Naive thymus-derived CD4-positive, alpha-beta T cell (primary cell): ENCODE measurements at regions of chr5 and their contacts with region 1.

Region 1: GRCh38 chr5:79235634-79236363 is at the start of gene JMY:
- DNase-seq: peak; percentile 73 to 89 (median 84)
- ATAC-seq: peak; percentile 89
- H3K4me3 ChIP-seq: peak within 1 kb of the TSS; percentile 95
- H3K4me3 Mint-ChIP-seq: peak within 1 kb of the TSS; percentile 86 to 97 (median 94)
- H3K27ac ChIP-seq: peak within 1 kb of the TSS; percentile 99
- H3K27ac Mint-ChIP-seq: peak within 1 kb of the TSS; percentile 83 to 98 (median 93)
- H3K4me1 ChIP-seq: peaks cover 6 to 35% of the 10 kb centered on the region in 2 donors
- H3K4me1 Mint-ChIP-seq: peaks cover 15 to 35% (median 29%) of the 10 kb centered on the region in 7 donors
- H3K27me3 ChIP-seq: no peaks in the 10 kb centered on the region
- H3K27me3 Mint-ChIP-seq: peaks cover 0 to 4% (median 0%) of the 10 kb centered on the region in 5 donors
- total RNA-seq, gene JMY: 6.5 to 47.0 (median 24.2) TPM

Region 2: DNA sequence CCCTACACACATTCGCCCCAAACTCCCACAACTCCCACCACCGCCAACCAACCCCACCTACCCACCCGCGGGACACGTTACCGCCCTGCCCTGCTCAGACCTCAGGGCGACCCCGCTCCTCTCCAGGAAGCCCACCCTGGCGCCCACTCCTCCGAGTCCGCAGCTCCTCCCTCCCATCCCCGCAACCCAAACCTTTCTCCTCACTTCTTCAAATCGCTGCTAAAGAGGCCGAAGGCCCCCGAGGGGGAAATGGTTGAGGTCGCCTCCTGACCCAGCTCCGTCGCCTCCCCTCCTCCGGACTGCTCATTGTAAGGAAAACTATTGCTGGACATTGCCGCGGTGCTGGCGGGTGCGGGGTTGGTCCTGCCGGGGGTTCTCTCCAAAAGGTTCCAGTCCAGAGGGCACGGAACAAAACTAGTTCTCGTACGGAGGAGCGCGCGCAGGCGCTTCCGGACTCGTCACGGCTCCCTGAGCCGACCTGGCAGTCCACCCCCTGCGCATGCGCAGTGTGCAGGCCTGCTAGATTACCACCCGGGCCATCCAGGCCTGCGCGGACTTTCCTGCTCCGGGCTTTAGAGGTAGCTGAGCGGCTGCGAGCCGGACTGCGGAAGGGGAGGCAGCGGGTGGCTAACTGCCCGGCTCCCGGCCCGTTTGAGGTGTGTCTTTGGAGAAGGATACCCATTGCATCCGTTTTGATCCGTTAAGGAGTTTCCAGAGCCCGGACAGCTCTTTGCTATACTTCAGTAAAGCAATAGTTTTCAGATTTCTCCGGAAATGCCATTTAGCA is 941.4 kb before region 1 on chr5 and contains the start of gene AP3B1:
- CTCF ChIA-PET with region 1: no interaction called
- POLR2A ChIA-PET with region 1: no interaction called
- intact Hi-C with region 1: loop called in 1 of 2 experiments (anchors 2 kb)
- DNase-seq: peak; percentile 94 to 98 (median 96)
- ATAC-seq: peak; percentile 97
- H3K4me3 ChIP-seq: peak within 1 kb of the TSS; percentile 98
- H3K4me3 Mint-ChIP-seq: peak within 1 kb of the TSS; percentile 86 to 100 (median 98)
- H3K27ac ChIP-seq: peak within 1 kb of the TSS; percentile 88
- H3K27ac Mint-ChIP-seq: peak within 1 kb of the TSS; percentile 77 to 99 (median 97)
- H3K4me1 ChIP-seq: peaks cover 5 to 9% of the 10 kb centered on the region in 2 donors
- H3K4me1 Mint-ChIP-seq: peaks cover 27 to 50% (median 46%) of the 10 kb centered on the region in 7 donors
- H3K27me3 ChIP-seq: no peaks in the 10 kb centered on the region
- H3K27me3 Mint-ChIP-seq: peaks cover 0 to 11% (median 0%) of the 10 kb centered on the region in 5 donors
- total RNA-seq, gene AP3B1: 30.2 to 45.0 (median 37.2) TPM

Region 3: GRCh38 chr5:79133657-79134451 is 101.9 kb before region 1 on chr5:
- CTCF ChIA-PET with region 1: interaction called, 5 read pairs
- POLR2A ChIA-PET with region 1: no interaction called
- intact Hi-C with region 1: loop called in 1 of 2 experiments (anchors 1 kb)
- DNase-seq: peak; percentile 26 to 60 (median 48)
- ATAC-seq: peak; percentile 84
- H3K4me3 ChIP-seq: peak overlapping the region; percentile 42
- H3K4me3 Mint-ChIP-seq: peak overlapping the region; percentile 45 to 80 (median 76)
- H3K27ac ChIP-seq: no peak overlapping the region
- H3K27ac Mint-ChIP-seq: peak overlapping the region in 4 of 9 donors; percentile 4 to 76 (median 42)
- H3K4me1 ChIP-seq: peaks cover 9 to 11% of the 10 kb centered on the region in 2 donors
- H3K4me1 Mint-ChIP-seq: peaks cover 7 to 17% (median 10%) of the 10 kb centered on the region in 7 donors
- H3K27me3 ChIP-seq: no peaks in the 10 kb centered on the region
- H3K27me3 Mint-ChIP-seq: peaks cover 0 to 9% (median 4%) of the 10 kb centered on the region in 5 donors

Region 4: DNA sequence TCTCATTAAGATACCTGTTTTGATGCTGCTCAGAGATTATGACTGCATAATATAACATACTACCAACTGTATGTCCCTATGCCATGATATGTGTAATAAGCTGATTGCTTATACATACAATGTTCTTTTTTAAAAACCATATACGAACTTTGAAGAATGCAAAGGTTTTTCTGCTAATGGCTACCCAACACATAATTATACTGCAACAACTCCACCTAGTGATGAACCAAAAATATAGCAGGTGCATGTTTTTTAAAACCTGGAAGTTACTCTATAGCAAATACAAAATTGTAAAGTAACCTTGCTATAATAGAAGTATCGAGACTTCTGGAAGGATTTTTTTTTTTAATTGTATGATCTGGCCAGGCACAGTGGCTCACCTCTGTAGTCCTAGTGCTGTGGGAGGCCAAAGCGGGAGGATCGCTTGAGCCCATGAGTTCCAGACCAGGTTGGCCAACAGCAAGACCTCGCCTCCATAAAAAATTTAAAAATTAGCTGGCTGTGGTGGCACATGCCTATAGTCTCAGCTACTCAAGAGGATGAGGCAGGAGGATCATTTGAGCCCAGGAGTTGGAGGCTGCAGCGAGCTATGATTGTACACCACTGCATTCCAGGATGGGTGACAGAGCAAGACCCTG is 229.0 kb after region 1 on chr5:
- CTCF ChIA-PET with region 1: no interaction called
- POLR2A ChIA-PET with region 1: no interaction called
- intact Hi-C with region 1: loop called in 1 of 2 experiments (anchors 10 kb)
- DNase-seq: peak in 5 of 9 donors; percentile 12 to 34 (median 32)
- ATAC-seq: peak; percentile 54
- H3K4me3 ChIP-seq: no peak overlapping the region
- H3K4me3 Mint-ChIP-seq: no peak overlapping the region
- H3K27ac ChIP-seq: no peak overlapping the region
- H3K27ac Mint-ChIP-seq: no peak overlapping the region
- H3K4me1 ChIP-seq: no peaks in the 10 kb centered on the region
- H3K4me1 Mint-ChIP-seq: peaks cover 0 to 2% (median 0%) of the 10 kb centered on the region in 7 donors
- H3K27me3 ChIP-seq: no peaks in the 10 kb centered on the region
- H3K27me3 Mint-ChIP-seq: peaks cover 0 to 9% (median 5%) of the 10 kb centered on the region in 5 donors

Region 5: GRCh38 chr5:79612667-79613198 is 376.9 kb after region 1 on chr5:
- CTCF ChIA-PET with region 1: no interaction called
- POLR2A ChIA-PET with region 1: no interaction called
- intact Hi-C with region 1: loop called (anchors 1 kb)
- DNase-seq: no peak
- ATAC-seq: no peak
- H3K4me3 ChIP-seq: peak overlapping the region; percentile 84
- H3K4me3 Mint-ChIP-seq: peak overlapping the region; percentile 95 to 100 (median 97)
- H3K27ac ChIP-seq: peak overlapping the region; percentile 90
- H3K27ac Mint-ChIP-seq: peak overlapping the region; percentile 91 to 99 (median 98)
- H3K4me1 ChIP-seq: peaks cover 14 to 18% of the 10 kb centered on the region in 2 donors
- H3K4me1 Mint-ChIP-seq: peaks cover 25 to 58% (median 44%) of the 10 kb centered on the region in 7 donors
- H3K27me3 ChIP-seq: no peaks in the 10 kb centered on the region
- H3K27me3 Mint-ChIP-seq: peaks cover 0 to 6% (median 2%) of the 10 kb centered on the region in 5 donors

Region 6: DNA sequence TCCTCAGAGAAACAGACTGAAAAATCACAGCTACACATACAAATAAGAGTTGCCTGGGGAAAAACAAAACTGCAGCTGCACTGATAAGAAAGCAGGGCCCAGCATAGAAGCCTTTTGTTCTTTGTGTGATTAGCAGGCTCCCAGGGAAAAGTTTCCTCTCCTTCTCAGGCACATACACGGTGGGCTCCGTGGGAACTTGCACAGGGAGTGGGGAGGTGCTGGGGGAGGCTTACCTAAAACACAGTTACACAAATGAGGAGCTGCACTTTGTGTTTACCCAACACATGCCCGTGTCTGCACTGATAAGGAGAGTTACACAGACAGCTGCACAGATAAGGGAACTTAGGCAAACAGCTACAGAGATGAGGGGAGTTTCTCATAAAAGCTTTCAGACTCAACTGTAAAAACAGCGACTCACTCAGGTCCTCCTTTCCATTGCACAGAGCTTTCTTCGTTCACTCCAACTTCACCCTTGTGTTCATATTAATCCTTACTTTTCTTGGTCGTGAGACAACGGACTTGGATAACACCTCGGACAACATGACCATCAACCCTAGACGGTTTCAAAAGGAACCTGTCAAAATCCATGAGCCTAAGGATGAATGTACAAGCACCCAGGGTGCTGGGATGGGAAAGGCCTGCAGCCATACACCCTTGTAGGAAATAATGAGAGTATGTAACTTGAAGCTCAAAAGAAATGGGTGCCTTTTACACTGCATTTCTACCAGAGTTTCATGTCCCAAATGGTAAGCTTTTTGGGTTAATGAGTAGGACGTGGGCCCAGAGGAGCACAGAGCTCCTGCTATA is 969.2 kb after region 1 on chr5:
- CTCF ChIA-PET with region 1: no interaction called
- POLR2A ChIA-PET with region 1: no interaction called
- intact Hi-C with region 1: no loop called
- DNase-seq: peak in 6 of 9 donors; percentile 44 to 59 (median 49)
- ATAC-seq: peak; percentile 88
- H3K4me3 ChIP-seq: no peak overlapping the region
- H3K4me3 Mint-ChIP-seq: peak overlapping the region in 9 of 10 donors; percentile 58 to 82 (median 73)
- H3K27ac ChIP-seq: peak overlapping the region; percentile 54
- H3K27ac Mint-ChIP-seq: peak overlapping the region; percentile 46 to 99 (median 90)
- H3K4me1 ChIP-seq: peaks cover 10 to 74% of the 10 kb centered on the region in 2 donors
- H3K4me1 Mint-ChIP-seq: peaks cover 45 to 99% (median 91%) of the 10 kb centered on the region in 7 donors
- H3K27me3 ChIP-seq: no peaks in the 10 kb centered on the region
- H3K27me3 Mint-ChIP-seq: no peaks in the 10 kb centered on the region

Region 7: GRCh38 chr5:80255732-80256479 is 1020.1 kb after region 1 on chr5 and contains the start of gene SERINC5:
- CTCF ChIA-PET with region 1: no interaction called
- POLR2A ChIA-PET with region 1: no interaction called
- intact Hi-C with region 1: loop called (anchors 10 kb)
- DNase-seq: peak; percentile 79 to 89 (median 86)
- ATAC-seq: peak; percentile 91
- H3K4me3 ChIP-seq: peak within 1 kb of the TSS; percentile 73
- H3K4me3 Mint-ChIP-seq: peak within 1 kb of the TSS; percentile 92 to 99 (median 96)
- H3K27ac ChIP-seq: peak within 1 kb of the TSS; percentile 88
- H3K27ac Mint-ChIP-seq: peak within 1 kb of the TSS; percentile 94 to 99 (median 98)
- H3K4me1 ChIP-seq: peaks cover 19 to 30% of the 10 kb centered on the region in 2 donors
- H3K4me1 Mint-ChIP-seq: peaks cover 40 to 56% (median 46%) of the 10 kb centered on the region in 7 donors
- H3K27me3 ChIP-seq: no peaks in the 10 kb centered on the region
- H3K27me3 Mint-ChIP-seq: no peaks in the 10 kb centered on the region
- total RNA-seq, gene SERINC5: 71.2 to 164 (median 163) TPM

Region 8: GRCh38 chr5:80654391-80655230 is 1418.8 kb after region 1 on chr5 and contains the starts of genes DHFR and MSH3:
- CTCF ChIA-PET with region 1: no interaction called
- POLR2A ChIA-PET with region 1: no interaction called
- intact Hi-C with region 1: loop called in 1 of 2 experiments (anchors 1 kb)
- DNase-seq: peak; percentile 73 to 91 (median 87)
- ATAC-seq: peak; percentile 86
- H3K4me3 ChIP-seq: peak within 1 kb of the TSS; percentile 91
- H3K4me3 Mint-ChIP-seq: peak within 1 kb of the TSS; percentile 82 to 98 (median 90)
- H3K27ac ChIP-seq: peak within 1 kb of the TSS; percentile 82
- H3K27ac Mint-ChIP-seq: peak within 1 kb of the TSS; percentile 89 to 97 (median 96)
- H3K4me1 ChIP-seq: peaks cover 24 to 28% of the 10 kb centered on the region in 2 donors
- H3K4me1 Mint-ChIP-seq: peaks cover 10 to 40% (median 32%) of the 10 kb centered on the region in 7 donors
- H3K27me3 ChIP-seq: no peaks in the 10 kb centered on the region
- H3K27me3 Mint-ChIP-seq: no peaks in the 10 kb centered on the region
- total RNA-seq, gene DHFR: 6.9 to 68.9 (median 17.0) TPM
- total RNA-seq, gene MSH3: 12.0 to 20.9 (median 16.7) TPM